Heart left ventricle (tissue), 16 donors: ENCODE measurements at regions of chr16 and their contacts with region 1.

Region 1: DNA sequence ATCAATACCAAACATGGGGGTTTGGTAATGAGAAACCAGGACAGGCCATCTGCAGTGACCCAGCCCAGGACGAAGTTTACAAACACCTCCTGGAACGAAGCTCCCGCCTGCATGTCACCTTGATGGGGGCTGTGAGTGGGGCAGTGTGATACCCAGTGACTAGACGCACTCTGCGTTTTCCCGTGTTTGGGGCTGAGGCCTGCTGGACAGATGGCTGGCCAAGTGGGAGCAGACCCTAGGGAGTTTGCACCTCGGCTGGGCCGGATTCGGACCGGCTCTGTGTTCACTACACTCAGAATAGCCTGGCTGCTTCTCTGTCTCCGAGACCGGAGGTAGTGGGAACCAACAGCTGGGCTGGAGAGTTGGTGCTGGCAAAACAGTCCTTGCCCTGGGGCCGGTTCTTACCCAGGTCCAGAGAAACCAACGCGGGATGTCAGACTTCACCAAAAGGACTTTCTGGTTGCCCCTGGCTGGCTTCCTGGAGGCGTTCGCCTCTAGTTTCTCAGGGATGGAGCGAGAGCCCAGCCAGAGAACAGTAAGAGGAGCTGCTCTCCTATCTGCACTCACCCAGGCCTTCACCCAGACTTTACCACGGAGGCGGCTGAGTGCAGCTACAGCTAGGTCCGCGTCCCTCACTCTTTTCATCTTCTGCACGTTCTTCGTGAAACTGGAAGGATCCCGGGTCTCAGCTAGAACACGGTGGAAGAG is 20.4 kb downstream of the CARHSP1 start:
- DNase-seq: peak in 1 of 5 donors; percentile 21
- ATAC-seq: no peak
- H3K4me3 ChIP-seq: no peak overlapping the region
- H3K27ac ChIP-seq: peak overlapping the region in 1 of 12 donors; percentile 70
- H3K4me1 ChIP-seq: peaks cover 0 to 31% (median 18%) of the 10 kb centered on the region in 12 donors
- H3K27me3 ChIP-seq: no peaks in the 10 kb centered on the region
- CTCF ChIP-seq: no peak
- POLR2A ChIP-seq: no peak

Region 2: GRCh38 chr16:8788578-8789172 is 59.7 kb before region 1 on chr16:
- intact Hi-C with region 1: no loop called
- DNase-seq: no peak
- ATAC-seq: no peak
- H3K4me3 ChIP-seq: no peak overlapping the region
- H3K27ac ChIP-seq: no peak overlapping the region
- H3K4me1 ChIP-seq: no peaks in the 10 kb centered on the region
- H3K27me3 ChIP-seq: no peaks in the 10 kb centered on the region
- CTCF ChIP-seq: no peak
- POLR2A ChIP-seq: no peak

Region 3: DNA sequence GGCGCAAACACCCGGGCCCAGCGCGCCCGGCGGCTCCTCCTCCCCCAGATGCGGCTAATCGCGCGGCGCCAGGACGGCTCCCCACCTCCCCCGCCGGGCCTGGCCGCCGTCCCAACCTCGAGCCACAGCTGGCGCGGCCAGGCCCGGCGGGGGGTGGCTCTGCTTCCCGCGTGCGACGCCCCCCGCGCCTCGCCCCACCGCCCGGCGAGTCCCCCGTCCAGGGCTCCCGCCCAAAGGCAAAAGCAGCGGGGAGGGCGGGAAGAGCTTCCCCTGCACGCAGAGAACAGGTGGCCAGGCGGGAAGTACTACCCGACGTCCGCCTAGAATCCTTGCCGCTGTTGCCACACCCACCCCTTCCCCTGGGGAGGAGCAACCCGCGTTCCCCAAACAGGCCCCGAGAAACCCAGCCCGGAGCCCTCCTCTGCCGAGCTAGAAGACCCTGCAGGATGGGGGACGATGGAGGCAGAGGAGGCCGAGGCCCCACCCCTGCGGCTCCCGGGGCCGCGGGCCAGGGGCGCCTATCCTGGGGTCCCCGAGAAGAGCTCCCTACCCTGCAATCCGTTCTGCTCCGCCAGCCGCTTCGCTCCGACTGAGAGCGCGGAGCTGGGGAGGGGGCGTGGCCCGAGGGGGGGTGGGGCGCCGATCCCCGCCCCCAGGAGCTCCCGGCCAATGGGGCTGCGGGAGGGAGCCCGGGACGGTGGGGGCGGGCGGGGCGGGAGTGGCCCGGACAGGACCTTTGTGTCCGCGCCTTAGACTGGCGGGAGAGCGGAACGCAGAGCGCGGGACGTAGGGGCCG is 20.2 kb after region 1 on chr16 and contains the start of gene CARHSP1:
- intact Hi-C with region 1: loop called in 1 of 10 experiments (anchors 2 kb)
- DNase-seq: peak; percentile 89 to 92 (median 90)
- ATAC-seq: peak; percentile 88 to 92 (median 90)
- H3K4me3 ChIP-seq: peak within 1 kb of the TSS; percentile 60 to 97 (median 74)
- H3K27ac ChIP-seq: peak within 1 kb of the TSS; percentile 28 to 95 (median 90)
- H3K4me1 ChIP-seq: peaks cover 0 to 65% (median 42%) of the 10 kb centered on the region in 12 donors
- H3K27me3 ChIP-seq: no peaks in the 10 kb centered on the region
- CTCF ChIP-seq: no peak
- POLR2A ChIP-seq: peak in 1 of 2 donors; percentile 65
- total RNA-seq, gene CARHSP1: 20.0 to 62.4 (median 29.0) TPM

Region 4: DNA sequence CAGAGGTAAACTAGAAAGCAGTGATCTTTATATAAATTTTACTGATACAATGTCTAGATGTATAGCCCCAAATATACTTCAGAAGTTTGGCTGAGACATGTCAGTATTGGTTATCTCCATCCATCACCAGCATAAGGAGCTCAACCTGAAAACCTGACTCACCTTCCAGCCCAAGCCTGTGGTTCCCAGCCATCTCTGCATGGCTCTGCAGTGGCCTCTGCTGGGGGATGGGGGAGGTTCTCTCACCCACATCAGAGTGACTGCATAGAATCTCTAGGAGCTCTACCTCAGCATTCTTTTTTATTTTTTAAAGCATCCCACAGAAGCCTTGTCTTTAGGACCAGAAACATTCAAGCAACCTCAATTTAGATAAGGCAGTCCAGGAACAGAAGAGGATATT is 88.0 kb after region 1 on chr16:
- intact Hi-C with region 1: no loop called
- DNase-seq: no peak
- ATAC-seq: peak in 3 of 4 donors; percentile 47 to 60 (median 59)
- H3K4me3 ChIP-seq: no peak overlapping the region
- H3K27ac ChIP-seq: no peak overlapping the region
- H3K4me1 ChIP-seq: peaks cover 4 to 75% (median 46%) of the 10 kb centered on the region in 12 donors
- H3K27me3 ChIP-seq: no peaks in the 10 kb centered on the region
- CTCF ChIP-seq: peak in 11 of 12 donors; percentile 15 to 56 (median 38)
- POLR2A ChIP-seq: no peak

Region 5: GRCh38 chr16:9159839-9160550 is 311.6 kb after region 1 on chr16:
- intact Hi-C with region 1: no loop called
- DNase-seq: peak in 1 of 5 donors; percentile 40
- ATAC-seq: peak in 3 of 4 donors; percentile 49 to 80 (median 65)
- H3K4me3 ChIP-seq: no peak overlapping the region
- H3K27ac ChIP-seq: no peak overlapping the region
- H3K4me1 ChIP-seq: peaks cover 0 to 4% (median 0%) of the 10 kb centered on the region in 12 donors
- H3K27me3 ChIP-seq: peaks cover 0 to 13% (median 0%) of the 10 kb centered on the region in 9 donors
- CTCF ChIP-seq: peak; percentile 37 to 78 (median 62)
- POLR2A ChIP-seq: no peak